Sciatic nerve (tissue), 2 donors: ENCODE measurements at regions of chr6 and their contacts with region 1.

Region 1: DNA sequence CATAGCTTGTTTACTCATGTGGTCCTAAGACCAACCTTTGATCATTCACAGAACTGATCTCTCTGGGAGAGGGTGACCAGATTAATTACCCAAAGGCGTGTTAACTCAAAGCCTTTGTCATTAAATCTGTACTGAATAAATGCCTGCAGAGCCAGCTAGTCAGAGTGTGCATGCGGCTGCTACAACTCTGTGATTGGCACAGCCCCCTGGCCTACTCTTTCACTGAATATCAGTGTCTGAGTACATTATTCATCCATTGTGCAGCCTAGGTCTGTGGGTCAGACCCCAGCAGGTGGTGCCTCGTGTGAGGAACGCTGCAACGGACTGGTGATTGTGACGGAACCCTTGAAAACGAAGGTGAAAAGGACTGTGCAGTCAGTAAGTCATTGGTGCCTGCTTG is 663.6 kb downstream of the PHF3 start:
- DNase-seq: no peak
- ATAC-seq: no peak

Region 2: DNA sequence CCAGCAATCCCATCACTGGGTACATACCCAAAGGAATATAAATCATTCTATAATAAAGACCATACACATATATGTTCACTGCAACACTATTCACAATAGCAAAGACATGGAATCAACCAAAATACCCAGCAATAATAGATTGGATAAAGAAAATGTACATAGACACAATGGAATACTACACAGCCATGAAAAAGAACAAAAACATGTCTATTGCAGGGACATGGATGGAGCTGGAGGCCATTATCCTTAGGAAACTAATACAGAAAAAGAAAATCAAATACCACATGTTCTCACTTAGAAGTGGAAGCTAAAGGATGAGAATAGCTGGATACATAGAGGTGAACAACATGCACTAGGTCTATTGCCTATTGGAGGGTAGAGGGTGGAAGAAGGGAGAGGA is 11.0 kb after region 1 on chr6:
- intact Hi-C with region 1: loop called (anchors 2 kb)
- DNase-seq: no peak
- ATAC-seq: no peak